CD8-positive, alpha-beta T cell (primary cell): ENCODE measurements at regions of chr16 and their contacts with region 1.

Region 1: DNA sequence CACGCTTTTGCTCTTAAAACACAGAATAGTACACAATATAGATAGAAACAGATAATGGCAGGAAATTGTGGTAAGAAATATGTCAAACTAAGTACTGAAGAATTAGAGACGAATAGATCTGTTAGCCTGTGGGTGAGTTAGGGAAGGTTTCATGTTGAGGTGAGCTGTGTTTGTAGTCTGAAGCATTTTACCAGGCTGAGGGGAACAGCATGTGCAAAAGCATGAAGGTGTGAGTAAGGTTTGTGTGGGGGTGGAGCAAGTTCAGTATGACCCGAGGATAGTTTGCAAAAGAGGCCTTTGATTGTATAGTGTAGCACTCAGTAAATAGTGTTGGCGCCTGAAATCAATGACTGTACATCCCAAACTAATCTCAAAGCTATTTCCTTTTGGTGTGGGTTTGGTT is 13.8 kb downstream of the IGSF6 start:
- DNase-seq: peak in 2 of 9 experiments; percentile 27 to 53
- ATAC-seq: peak; percentile 47
- H3K4me3 ChIP-seq: no peak overlapping the region
- H3K4me3 Mint-ChIP-seq: peak overlapping the region; percentile 4
- H3K27ac ChIP-seq: peak overlapping the region; percentile 8 to 60
- H3K27ac Mint-ChIP-seq: peak overlapping the region; percentile 87
- H3K4me1 ChIP-seq: peaks cover 29% of the 10 kb centered on the region
- H3K4me1 Mint-ChIP-seq: peaks cover 31% of the 10 kb centered on the region
- H3K27me3 ChIP-seq: no peaks in the 10 kb centered on the region
- H3K27me3 Mint-ChIP-seq: no peaks in the 10 kb centered on the region
- CTCF ChIP-seq: no peak

Region 2: GRCh38 chr16:21590287-21590686 is 48.3 kb before region 1 on chr16:
- CTCF ChIA-PET with region 1: interaction called, 191 read pairs
- POLR2A ChIA-PET with region 1: interaction called, 5 read pairs
- intact Hi-C with region 1: no loop called
- DNase-seq: no peak
- ATAC-seq: no peak
- H3K4me3 ChIP-seq: no peak overlapping the region
- H3K4me3 Mint-ChIP-seq: no peak overlapping the region
- H3K27ac ChIP-seq: no peak overlapping the region
- H3K27ac Mint-ChIP-seq: no peak overlapping the region
- H3K4me1 ChIP-seq: no peaks in the 10 kb centered on the region
- H3K4me1 Mint-ChIP-seq: no peaks in the 10 kb centered on the region
- H3K27me3 ChIP-seq: no peaks in the 10 kb centered on the region
- H3K27me3 Mint-ChIP-seq: no peaks in the 10 kb centered on the region
- CTCF ChIP-seq: no peak

Region 3: DNA sequence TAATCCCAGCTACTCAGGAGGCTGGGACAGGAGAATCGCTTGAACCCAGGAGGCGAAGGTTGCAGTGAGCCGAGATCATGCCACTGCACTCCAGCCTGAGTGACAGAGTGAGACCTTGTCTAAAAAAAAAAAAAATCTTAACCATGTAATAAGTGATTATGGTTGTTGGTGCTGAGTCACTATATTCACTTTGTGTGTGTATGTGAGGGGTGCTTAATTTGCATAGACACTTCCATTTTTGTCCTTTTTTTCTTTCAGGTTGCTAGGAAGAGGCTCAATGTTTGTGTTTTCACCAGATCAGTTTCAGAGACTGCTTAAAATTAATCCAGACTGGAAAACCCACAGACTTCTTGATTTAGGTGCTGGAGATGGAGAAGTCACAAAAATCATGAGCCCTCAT is 21.0 kb before region 1 on chr16:
- CTCF ChIA-PET with region 1: interaction called, 5 read pairs
- POLR2A ChIA-PET with region 1: interaction called, 3 read pairs
- intact Hi-C with region 1: loop called in 1 of 2 experiments (anchors 2 kb)
- DNase-seq: no peak
- ATAC-seq: no peak
- H3K4me3 ChIP-seq: no peak overlapping the region
- H3K4me3 Mint-ChIP-seq: no peak overlapping the region
- H3K27ac ChIP-seq: no peak overlapping the region
- H3K27ac Mint-ChIP-seq: peak overlapping the region; percentile 57
- H3K4me1 ChIP-seq: peaks cover 27% of the 10 kb centered on the region
- H3K4me1 Mint-ChIP-seq: peaks cover 58% of the 10 kb centered on the region
- H3K27me3 ChIP-seq: no peaks in the 10 kb centered on the region
- H3K27me3 Mint-ChIP-seq: no peaks in the 10 kb centered on the region
- CTCF ChIP-seq: no peak

Region 4: DNA sequence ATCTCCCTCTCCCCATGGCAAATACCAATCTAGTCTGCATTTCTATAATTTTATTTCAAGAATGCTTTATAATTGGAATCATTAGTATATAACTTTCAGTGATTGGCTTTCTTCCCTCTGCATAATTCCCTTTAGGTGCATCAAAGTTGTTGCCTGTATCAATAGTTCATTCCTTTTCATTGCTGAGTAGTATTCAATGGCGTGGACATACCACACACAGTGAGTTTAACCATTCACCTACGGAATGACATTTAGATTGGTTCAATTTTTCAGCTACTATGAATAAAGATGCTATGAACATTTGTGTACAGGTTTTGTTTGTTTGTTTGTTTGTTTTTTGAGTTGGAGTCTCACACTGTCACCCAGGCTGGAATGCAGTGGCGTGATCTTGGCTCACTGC is 34.9 kb after region 1 on chr16:
- CTCF ChIA-PET with region 1: no interaction called
- POLR2A ChIA-PET with region 1: no interaction called
- intact Hi-C with region 1: no loop called
- DNase-seq: no peak
- ATAC-seq: no peak
- H3K4me3 ChIP-seq: no peak overlapping the region
- H3K4me3 Mint-ChIP-seq: no peak overlapping the region
- H3K27ac ChIP-seq: no peak overlapping the region
- H3K27ac Mint-ChIP-seq: no peak overlapping the region
- H3K4me1 ChIP-seq: no peaks in the 10 kb centered on the region
- H3K4me1 Mint-ChIP-seq: no peaks in the 10 kb centered on the region
- H3K27me3 ChIP-seq: peaks cover 0 to 3% of the 10 kb centered on the region in 2 experiments
- H3K27me3 Mint-ChIP-seq: no peaks in the 10 kb centered on the region
- CTCF ChIP-seq: no peak

Region 5: GRCh38 chr16:22684574-22685458 is 1046.2 kb after region 1 on chr16:
- CTCF ChIA-PET with region 1: no interaction called
- POLR2A ChIA-PET with region 1: no interaction called
- intact Hi-C with region 1: no loop called
- DNase-seq: no peak
- ATAC-seq: no peak
- H3K4me3 ChIP-seq: no peak overlapping the region
- H3K4me3 Mint-ChIP-seq: no peak overlapping the region
- H3K27ac ChIP-seq: no peak overlapping the region
- H3K27ac Mint-ChIP-seq: no peak overlapping the region
- H3K4me1 ChIP-seq: no peaks in the 10 kb centered on the region
- H3K4me1 Mint-ChIP-seq: peaks cover 4% of the 10 kb centered on the region
- H3K27me3 ChIP-seq: peaks cover 3 to 6% of the 10 kb centered on the region in 2 experiments
- H3K27me3 Mint-ChIP-seq: peaks cover 12% of the 10 kb centered on the region
- CTCF ChIP-seq: no peak